Cardiac septum (tissue), 1 donor: ENCODE measurements at regions of chr1 and their contacts with region 1.

Region 1: DNA sequence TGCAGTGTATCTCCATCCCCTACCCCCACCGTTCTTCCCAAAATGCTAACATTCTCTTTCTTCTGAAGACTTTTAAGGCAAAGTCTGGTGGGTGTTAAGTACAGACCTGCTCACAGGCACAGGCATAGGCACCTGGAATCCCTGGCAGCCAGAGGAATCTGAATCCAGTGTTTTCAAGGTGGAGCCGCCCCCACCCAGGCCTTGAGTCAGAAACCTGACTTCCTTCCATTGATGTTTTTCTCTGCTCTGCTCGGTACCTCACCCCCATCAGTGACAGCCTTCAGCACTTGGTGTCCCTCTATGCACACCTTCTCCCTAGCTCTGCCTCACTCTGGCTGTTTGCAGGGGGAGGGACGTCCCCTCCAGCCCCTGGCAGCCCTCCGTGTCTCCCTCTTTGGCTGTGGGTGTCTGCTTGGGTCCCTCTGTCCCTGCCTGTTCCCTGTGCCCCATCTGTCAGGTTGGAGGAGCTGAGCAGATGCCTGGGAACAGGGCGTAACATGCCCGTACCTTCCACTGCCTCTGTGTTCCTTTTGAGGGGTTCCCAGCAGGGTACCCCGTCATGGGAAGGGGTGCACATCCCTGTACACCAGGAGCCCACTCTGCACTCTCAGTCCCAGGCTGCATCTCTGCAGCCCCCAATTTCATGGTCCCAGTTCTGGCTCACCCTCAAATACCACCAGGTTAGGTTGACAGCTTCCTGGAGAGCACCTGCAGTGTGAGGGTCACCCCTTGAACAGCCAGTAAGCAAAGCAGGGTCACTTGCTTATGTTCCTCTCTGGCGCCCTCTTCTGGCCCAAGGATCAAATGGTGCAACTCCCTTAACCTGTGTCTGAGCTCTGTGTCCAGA is 6.7 kb downstream of the NCDN start:
- DNase-seq: peak; percentile 85

Region 2: DNA sequence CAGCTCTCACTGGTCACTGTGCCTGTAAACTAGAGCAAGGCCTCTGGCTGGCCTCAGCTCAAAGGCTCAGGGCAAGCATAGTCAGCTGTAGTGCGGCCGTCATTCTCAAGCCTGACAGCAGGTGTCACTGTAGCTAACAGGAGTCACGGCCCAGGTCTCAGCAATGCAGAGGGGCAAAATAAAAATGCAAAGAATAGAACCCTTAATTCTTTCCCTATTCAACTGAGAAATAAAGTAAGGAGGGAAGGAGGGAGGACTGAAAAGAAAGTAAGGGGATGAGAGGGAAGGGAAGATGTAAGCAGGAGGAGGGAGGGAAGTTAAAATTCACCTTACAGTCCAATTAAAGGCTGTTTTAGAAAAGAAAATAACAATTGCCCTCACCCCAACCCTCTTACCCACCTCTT is 113.1 kb before region 1 on chr1:
- intact Hi-C with region 1: loop called (anchors 2 kb)
- DNase-seq: peak; percentile 92

Region 3: GRCh38 chr1:35641233-35641866 is 77.1 kb after region 1 on chr1 and contains the start of gene PSMB2:
- intact Hi-C with region 1: no loop called
- DNase-seq: peak; percentile 97
- total RNA-seq, gene PSMB2: 35.6 TPM

Region 4: DNA sequence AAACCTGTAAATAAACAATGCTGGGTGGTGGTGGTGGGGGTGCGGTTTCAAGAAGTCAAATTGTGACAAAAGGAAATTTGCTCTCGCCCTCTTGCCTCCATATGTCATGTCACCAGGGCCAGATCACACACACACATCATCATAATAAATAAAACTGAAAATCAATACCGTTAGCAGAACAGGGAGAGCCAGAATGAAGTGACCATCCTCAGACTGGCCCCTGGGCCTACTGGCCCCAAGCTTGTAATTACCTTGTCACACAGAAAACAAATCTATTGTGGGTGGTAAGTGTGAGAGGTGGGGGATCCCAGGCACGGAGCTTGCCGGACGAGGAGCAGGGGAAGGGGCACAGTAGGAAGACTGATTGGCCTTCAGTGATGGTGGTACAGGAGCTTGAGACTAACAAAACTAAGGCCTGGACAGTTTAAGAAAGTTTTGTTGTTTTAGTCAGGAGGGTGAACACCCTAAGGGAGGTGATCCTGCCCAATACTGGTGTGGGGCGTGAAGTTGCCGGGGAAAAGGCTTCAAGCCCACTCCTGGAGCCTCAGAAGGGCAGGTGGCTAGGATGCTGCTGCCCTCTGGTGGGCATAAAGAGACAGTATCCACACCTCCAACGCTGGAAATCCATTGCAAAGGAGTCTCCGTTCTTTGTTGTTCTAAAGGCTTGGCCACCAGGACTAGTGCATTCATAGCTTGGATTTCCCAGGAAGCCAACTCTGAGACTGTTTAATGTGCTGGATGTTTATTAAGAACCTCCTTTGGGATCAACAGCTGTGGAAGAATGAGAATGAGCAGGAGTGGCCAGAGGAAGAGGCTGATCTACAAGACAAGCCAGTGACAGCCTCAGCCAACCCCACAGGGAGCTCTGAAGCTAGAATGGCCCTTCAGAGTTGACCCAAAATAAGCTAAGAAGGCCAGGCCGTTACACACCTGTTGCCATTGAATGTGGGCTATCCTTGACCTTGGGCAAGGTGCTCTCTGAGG is 162.5 kb after region 1 on chr1:
- intact Hi-C with region 1: loop called (anchors 1 kb)
- DNase-seq: no peak

Region 5: GRCh38 chr1:35773711-35774110 is 209.5 kb after region 1 on chr1:
- intact Hi-C with region 1: loop called (anchors 2 kb)
- DNase-seq: no peak